ENCODE measurements at regions of chr10 and their contacts with region 1.

Region 1: DNA sequence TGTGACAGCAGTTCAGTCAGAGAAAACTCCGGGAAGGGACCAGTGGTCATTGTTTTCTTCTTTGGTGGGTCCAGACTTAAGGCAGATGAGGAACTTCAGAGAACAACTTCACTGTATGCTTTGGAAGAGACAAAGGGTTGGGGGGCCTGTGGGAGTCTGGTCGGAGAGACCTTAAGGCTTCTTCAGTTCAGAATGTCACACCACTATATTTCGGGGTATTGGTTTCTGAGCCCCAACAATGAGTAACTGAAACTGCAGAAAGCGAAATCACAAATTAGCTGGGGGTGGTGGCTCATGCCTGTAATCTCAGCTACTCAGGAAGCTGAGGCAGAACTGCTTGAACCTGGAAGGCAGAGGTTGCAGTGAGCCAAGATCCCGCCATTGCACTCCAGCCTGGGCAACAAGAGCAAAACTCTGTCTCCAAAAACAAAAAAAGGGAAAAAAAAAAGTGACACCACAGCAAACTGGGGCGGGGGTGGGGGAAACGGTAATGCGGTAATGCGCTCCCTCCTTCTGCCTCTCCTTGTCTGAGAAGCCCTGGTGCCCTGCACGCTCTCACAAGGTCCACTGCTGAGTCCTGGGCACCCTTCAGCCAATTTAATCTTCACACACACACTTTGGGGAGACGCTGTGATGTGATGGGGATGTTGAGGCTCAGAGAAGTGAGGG is 2.2 kb upstream of the ADIRF start:
- DNase-seq: no peak
- ATAC-seq: no peak
- H3K4me3 ChIP-seq: no peak overlapping the region
- H3K27ac ChIP-seq: no peak overlapping the region
- H3K4me1 ChIP-seq: peaks cover 43% of the 10 kb centered on the region
- H3K27me3 ChIP-seq: no peaks in the 10 kb centered on the region
- CTCF ChIP-seq: no peak

Region 2: DNA sequence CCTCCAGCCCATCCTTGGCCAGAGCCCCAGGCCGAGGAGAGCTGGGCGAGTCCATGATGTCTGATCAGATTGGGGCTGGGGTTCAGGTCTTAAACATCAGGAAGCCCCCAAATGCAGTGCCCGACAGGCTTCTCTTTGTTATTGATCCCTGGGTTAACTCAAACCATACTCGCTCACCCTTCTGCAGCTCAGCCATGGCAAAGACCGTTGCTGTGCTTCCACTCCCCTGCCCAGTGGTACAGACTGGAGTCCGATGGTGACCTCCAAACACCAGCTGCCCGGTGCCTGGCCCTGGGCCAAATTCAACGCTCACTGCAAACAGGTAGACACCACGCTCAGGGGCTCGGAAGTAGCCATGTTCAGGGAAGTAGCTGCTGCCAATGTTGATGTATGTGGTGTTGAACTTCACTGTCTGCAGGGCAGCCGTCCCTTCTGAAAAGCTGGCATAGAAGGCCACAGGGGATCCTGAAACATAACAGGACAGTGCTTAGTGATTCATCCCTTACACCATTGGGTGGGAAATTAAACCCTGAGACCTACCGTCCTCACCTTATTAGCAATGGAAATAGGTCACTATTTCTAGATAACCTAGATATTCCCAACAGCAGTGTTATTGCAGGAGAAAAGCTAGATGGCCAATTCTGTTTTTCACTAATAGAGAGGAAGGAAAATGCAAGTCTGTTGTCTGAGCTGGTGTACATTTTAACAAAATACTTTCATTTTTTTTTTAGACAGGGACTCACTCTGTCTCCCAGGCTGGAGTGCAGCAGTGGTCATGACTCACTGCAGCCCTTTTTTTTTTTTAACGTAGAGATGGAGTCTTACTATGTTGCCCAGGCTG is 29.2 kb before region 1 on chr10:
- CTCF ChIA-PET with region 1: interaction called, 5 read pairs
- POLR2A ChIA-PET with region 1: no interaction called
- intact Hi-C with region 1: loop called (anchors 1 kb)
- DNase-seq: no peak
- ATAC-seq: no peak
- H3K4me3 ChIP-seq: no peak overlapping the region
- H3K27ac ChIP-seq: no peak overlapping the region
- H3K4me1 ChIP-seq: peaks cover 7% of the 10 kb centered on the region
- H3K27me3 ChIP-seq: no peaks in the 10 kb centered on the region
- CTCF ChIP-seq: no peak

Measured in PC-3 (cell line).